ENCODE measurements at regions of chr1 and their contacts with region 1.

Region 1: GRCh38 chr1:171226747-171227370 is 21.4 kb upstream of the FMO1 start:
- DNase-seq: peak; percentile 54
- CTCF ChIP-seq: peak; percentile 71

Region 2: DNA sequence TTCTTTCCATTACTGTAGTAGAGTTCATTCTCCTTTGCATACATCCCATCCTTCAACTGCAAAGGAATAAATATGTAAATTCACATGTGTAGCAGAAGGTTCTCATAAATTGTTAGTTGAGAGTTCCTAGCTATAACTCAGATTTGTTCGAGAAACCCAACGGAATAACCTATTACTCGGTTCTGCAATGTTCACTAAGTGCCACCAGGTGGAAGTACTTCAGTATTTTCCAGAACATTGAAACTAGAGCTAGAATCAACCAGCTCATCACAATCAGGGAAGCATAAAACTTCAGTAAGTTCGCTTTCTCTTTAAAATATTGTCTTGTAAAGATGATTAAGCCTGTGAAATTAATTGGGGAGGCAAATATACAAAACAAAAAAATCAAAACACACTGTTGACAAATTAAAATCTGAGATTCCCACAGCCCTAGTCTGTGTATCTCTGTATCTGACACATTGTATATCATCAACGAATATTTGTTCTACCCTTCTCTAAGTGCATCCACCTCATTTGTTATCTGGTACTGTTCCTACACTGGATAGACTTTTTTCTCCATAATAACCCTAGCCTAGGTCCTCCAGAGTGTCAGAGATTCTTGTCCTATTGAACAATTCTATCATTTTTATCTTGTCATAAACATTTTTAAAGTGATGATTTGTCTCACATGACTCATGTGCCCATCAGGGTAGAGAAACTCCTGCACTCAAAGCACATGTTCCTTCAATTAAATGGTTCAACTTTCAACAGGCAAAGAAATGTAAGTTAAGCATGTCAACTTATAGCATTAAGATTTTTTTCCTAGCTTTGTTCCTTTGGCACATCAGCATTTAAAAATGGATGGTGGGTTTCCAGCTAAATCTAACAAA is 259.6 kb before region 1 on chr1:
- CTCF ChIA-PET with region 1: interaction called, 27 read pairs
- POLR2A ChIA-PET with region 1: no interaction called
- DNase-seq: peak; percentile 23
- CTCF ChIP-seq: peak; percentile 38

Region 3: GRCh38 chr1:171081314-171081753 is 145.5 kb before region 1 on chr1:
- CTCF ChIA-PET with region 1: interaction called, 16 read pairs
- POLR2A ChIA-PET with region 1: no interaction called
- DNase-seq: no peak
- CTCF ChIP-seq: no peak

Region 4: DNA sequence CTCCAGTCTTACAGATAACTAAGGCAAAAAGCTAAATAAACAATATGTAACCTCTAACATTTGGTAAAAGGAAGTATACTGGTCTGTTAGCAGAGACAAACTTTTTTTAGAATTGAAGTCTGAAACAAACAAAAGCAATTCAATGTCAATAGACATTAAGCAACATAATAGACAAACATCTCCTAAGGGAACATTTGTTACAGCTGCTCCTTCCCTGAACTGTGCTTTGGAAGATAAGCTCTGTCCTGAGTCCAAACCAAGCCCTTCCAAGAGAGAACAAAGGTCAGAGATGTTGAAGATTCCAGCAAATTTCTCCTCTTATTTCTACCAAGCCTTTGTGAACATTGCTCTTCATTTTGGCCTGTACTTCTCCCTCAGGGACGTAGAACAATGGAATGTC is 16.5 kb before region 1 on chr1:
- CTCF ChIA-PET with region 1: interaction called, 21 read pairs
- POLR2A ChIA-PET with region 1: no interaction called
- DNase-seq: no peak
- CTCF ChIP-seq: no peak

Region 5: DNA sequence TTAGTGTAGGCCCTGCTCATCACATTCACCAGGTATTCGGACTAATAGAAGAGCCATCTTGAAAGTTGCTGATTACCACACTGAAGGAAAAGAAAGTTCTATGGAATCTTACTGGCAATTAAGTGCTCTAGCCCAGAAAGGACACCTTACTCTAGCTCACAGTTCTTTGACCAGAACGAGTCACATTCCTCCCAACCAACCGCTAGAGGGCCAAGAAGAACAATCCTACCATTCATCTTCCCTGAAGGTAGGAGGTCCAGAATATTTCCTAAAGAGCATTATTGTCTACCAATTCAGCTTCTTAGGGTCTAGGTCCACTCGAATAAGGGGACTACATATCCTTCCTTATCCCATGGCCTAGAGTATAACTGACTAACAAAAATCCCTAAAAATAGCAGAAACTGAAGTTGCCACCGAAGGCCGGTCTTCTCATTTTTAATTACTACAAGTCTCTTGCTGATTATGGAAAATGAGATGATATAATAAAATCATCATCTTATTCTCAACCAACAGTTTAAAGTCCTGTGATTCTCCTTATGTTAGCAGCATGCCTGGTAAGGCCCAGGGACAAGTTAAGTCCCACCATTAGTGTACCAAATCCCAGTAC is 18.7 kb after region 1 on chr1:
- CTCF ChIA-PET with region 1: interaction called, 32 read pairs
- POLR2A ChIA-PET with region 1: no interaction called
- DNase-seq: peak; percentile 38
- CTCF ChIP-seq: peak; percentile 71

Measured in GM10248 (cell line).